CD8-positive, alpha-beta T cell (primary cell): ENCODE measurements at regions of chr1 and their contacts with region 1.

Region 1: DNA sequence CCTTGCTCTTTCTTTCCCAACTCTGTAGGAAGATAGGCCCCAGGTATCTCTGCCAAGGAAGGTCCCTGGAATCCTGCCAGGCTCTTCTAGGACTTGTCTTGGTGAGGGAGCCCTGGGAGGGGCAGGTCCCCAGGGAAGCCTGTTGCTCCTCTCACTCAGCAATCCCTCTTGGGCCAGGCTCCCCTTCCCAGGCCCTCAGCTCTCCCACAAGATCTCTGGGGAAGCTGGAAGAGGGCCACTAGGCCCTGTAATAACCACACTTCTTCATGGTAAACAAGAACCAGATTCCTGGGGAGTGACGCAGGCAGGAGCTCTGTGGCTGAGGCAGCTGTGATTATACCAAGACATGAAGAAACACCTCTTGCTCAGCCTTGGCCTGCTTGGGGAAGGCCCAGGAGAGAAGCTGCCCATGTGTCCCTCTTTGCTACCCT is 9.9 kb upstream of the MAPKAPK2 start:
- DNase-seq: no peak
- ATAC-seq: no peak
- H3K4me3 ChIP-seq: no peak overlapping the region
- H3K4me3 Mint-ChIP-seq: no peak overlapping the region
- H3K27ac ChIP-seq: no peak overlapping the region
- H3K27ac Mint-ChIP-seq: no peak overlapping the region
- H3K4me1 ChIP-seq: no peaks in the 10 kb centered on the region
- H3K4me1 Mint-ChIP-seq: no peaks in the 10 kb centered on the region
- H3K27me3 ChIP-seq: no peaks in the 10 kb centered on the region
- H3K27me3 Mint-ChIP-seq: no peaks in the 10 kb centered on the region
- CTCF ChIP-seq: no peak

Region 2: DNA sequence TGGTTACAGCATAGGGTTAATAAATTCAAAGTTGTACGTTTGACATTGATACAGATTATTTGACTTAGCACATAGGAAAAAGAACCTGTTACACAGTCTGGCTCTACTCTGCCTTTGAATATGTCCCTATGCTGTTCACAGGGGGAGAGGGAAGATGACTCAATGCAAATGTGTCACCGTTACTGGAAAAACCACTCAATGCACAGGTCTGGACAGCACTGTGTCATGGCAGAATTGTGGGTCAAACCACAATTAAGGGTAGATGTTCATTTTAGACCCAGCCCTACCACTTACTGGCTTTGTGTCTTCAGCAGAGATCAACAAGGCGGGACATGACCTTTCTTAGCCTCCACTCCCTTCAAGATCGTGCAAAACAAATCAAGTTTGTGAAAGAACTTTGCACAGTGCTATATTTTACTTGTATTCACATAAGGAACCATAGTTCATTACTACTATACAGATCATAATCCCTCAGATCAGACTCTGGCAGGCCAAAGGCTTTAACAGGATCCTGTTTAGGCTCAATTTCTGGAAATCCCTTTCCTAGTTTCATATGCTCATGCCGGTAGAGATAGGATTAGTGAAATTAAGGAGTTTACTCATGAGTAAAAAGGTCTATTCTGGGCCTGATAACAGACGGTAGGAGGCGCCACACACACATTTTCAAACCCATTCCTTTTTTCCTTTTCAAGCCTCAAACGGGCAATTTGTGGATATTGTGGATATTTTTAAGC is 84.6 kb before region 1 on chr1:
- CTCF ChIA-PET with region 1: no interaction called
- POLR2A ChIA-PET with region 1: no interaction called
- intact Hi-C with region 1: no loop called
- DNase-seq: peak in 6 of 9 experiments; percentile 50 to 78 (median 59)
- ATAC-seq: peak; percentile 87
- H3K4me3 ChIP-seq: no peak overlapping the region
- H3K4me3 Mint-ChIP-seq: peak overlapping the region; percentile 16
- H3K27ac ChIP-seq: peak overlapping the region in 1 of 2 experiments; percentile 44
- H3K27ac Mint-ChIP-seq: peak overlapping the region; percentile 91
- H3K4me1 ChIP-seq: peaks cover 20% of the 10 kb centered on the region
- H3K4me1 Mint-ChIP-seq: peaks cover 46% of the 10 kb centered on the region
- H3K27me3 ChIP-seq: no peaks in the 10 kb centered on the region
- H3K27me3 Mint-ChIP-seq: no peaks in the 10 kb centered on the region
- CTCF ChIP-seq: peak; percentile 50

Region 3: DNA sequence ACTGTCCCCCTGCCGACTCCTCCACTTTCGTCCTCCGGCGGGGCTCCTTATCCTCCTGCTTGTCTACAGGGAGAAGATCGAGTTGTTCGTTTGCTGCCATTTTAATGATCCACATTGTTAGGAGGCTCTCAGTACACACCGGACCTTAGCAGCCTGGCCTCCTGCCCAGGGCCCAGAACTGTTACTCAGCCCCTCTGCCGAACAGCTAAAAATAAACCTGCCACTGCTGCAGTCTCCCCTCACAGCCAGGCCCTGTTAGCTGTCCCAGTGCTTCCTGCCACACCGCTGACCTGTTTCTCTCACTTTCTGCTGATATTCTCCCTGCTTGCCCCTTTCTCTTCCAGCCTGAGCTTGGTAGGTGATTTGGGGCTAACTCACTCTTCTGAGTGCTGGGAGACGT is 18.3 kb after region 1 on chr1:
- CTCF ChIA-PET with region 1: interaction called, 3 read pairs
- POLR2A ChIA-PET with region 1: no interaction called
- intact Hi-C with region 1: loop called in 1 of 2 experiments (anchors 2 kb)
- DNase-seq: no peak
- ATAC-seq: peak; percentile 23
- H3K4me3 ChIP-seq: no peak overlapping the region
- H3K4me3 Mint-ChIP-seq: no peak overlapping the region
- H3K27ac ChIP-seq: no peak overlapping the region
- H3K27ac Mint-ChIP-seq: no peak overlapping the region
- H3K4me1 ChIP-seq: peaks cover 15% of the 10 kb centered on the region
- H3K4me1 Mint-ChIP-seq: peaks cover 92% of the 10 kb centered on the region
- H3K27me3 ChIP-seq: no peaks in the 10 kb centered on the region
- H3K27me3 Mint-ChIP-seq: no peaks in the 10 kb centered on the region
- CTCF ChIP-seq: no peak

Region 4: GRCh38 chr1:207863893-207864535 is 1189.3 kb after region 1 on chr1:
- CTCF ChIA-PET with region 1: no interaction called
- POLR2A ChIA-PET with region 1: no interaction called
- intact Hi-C with region 1: no loop called
- DNase-seq: peak in 7 of 9 experiments; percentile 36 to 80 (median 61)
- ATAC-seq: peak; percentile 47
- H3K4me3 ChIP-seq: peak overlapping the region in 1 of 2 experiments; percentile 5
- H3K4me3 Mint-ChIP-seq: peak overlapping the region; percentile 56
- H3K27ac ChIP-seq: peak overlapping the region; percentile 23 to 61
- H3K27ac Mint-ChIP-seq: peak overlapping the region; percentile 96
- H3K4me1 ChIP-seq: peaks cover 77% of the 10 kb centered on the region
- H3K4me1 Mint-ChIP-seq: peaks cover 74% of the 10 kb centered on the region
- H3K27me3 ChIP-seq: no peaks in the 10 kb centered on the region
- H3K27me3 Mint-ChIP-seq: no peaks in the 10 kb centered on the region
- CTCF ChIP-seq: no peak